ENCODE measurements at regions of chr10 and their contacts with region 1.

Region 1: GRCh38 chr10:95246579-95247051 is 44.2 kb downstream of the PDLIM1 start:
- DNase-seq: peak; percentile 13 to 77 (median 61)
- ATAC-seq: peak; percentile 40
- H3K4me3 ChIP-seq: no peak overlapping the region
- H3K4me3 Mint-ChIP-seq: no peak overlapping the region
- H3K27ac ChIP-seq: no peak overlapping the region
- H3K27ac Mint-ChIP-seq: no peak overlapping the region
- H3K4me1 ChIP-seq: no peaks in the 10 kb centered on the region
- H3K4me1 Mint-ChIP-seq: no peaks in the 10 kb centered on the region
- H3K27me3 ChIP-seq: no peaks in the 10 kb centered on the region
- H3K27me3 Mint-ChIP-seq: peaks cover 15% of the 10 kb centered on the region
- CTCF ChIP-seq: peak; percentile 62

Region 2: GRCh38 chr10:94630017-94630688 is 616.5 kb before region 1 on chr10:
- CTCF ChIA-PET with region 1: no interaction called
- POLR2A ChIA-PET with region 1: no interaction called
- intact Hi-C with region 1: loop called (anchors 5 to 10 kb)
- DNase-seq: peak in 2 of 9 experiments; percentile 3 to 13
- ATAC-seq: no peak
- H3K4me3 ChIP-seq: no peak overlapping the region
- H3K4me3 Mint-ChIP-seq: no peak overlapping the region
- H3K27ac ChIP-seq: no peak overlapping the region
- H3K27ac Mint-ChIP-seq: no peak overlapping the region
- H3K4me1 ChIP-seq: no peaks in the 10 kb centered on the region
- H3K4me1 Mint-ChIP-seq: no peaks in the 10 kb centered on the region
- H3K27me3 ChIP-seq: no peaks in the 10 kb centered on the region
- H3K27me3 Mint-ChIP-seq: no peaks in the 10 kb centered on the region
- CTCF ChIP-seq: peak; percentile 60

Region 3: GRCh38 chr10:95097805-95098204 is 148.8 kb before region 1 on chr10:
- CTCF ChIA-PET with region 1: no interaction called
- POLR2A ChIA-PET with region 1: no interaction called
- intact Hi-C with region 1: no loop called
- DNase-seq: no peak
- ATAC-seq: no peak
- H3K4me3 ChIP-seq: no peak overlapping the region
- H3K4me3 Mint-ChIP-seq: no peak overlapping the region
- H3K27ac ChIP-seq: no peak overlapping the region
- H3K27ac Mint-ChIP-seq: no peak overlapping the region
- H3K4me1 ChIP-seq: no peaks in the 10 kb centered on the region
- H3K4me1 Mint-ChIP-seq: no peaks in the 10 kb centered on the region
- H3K27me3 ChIP-seq: no peaks in the 10 kb centered on the region
- H3K27me3 Mint-ChIP-seq: no peaks in the 10 kb centered on the region
- CTCF ChIP-seq: no peak

Region 4: DNA sequence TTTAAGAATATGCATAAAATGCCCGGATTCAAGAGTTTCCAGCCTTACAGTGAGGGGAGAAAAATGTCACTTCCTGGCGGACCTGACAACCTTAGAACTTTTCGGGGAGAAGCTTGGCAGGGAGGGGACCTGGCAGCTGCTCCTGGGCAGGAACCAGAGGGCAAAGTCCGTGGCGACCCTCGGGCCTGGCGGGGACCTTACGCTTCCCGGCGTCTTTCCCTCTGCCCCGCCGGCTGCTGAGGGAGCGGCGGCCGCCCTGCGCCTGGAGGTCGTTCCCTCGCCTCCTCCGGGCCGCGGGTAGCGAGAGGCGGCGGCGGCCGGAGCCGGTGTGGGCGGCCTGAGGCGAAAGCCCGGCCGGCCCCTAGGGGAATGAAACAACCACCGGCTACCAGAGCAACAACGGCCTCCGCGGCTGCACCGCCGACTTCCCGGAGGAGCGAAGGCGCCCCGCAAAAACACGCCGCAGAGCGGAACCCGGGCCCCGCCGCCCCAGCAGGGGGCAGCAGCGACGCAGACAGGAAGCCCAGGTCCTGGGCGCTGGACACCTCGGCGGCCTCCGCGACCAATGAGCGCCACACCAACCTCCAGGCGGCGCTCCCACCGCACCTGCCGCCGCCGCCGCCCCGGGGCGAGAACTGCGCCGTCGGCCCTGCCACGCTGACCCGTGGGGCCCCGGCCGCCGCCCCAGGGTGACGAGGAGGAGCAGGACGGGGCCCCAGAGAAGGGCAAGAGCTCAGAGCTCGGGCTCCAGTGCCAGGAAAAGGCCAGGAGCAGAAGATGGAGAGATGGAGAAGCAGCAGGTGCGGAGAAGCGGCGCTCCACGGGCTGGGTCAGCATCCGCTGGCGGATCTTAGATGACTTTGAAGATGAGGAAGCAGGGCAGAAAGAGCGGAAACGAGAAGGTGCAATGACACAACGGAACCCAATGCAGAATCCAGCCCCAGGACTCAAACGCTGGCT is 63.1 kb before region 1 on chr10:
- CTCF ChIA-PET with region 1: interaction called, 3 read pairs
- POLR2A ChIA-PET with region 1: no interaction called
- intact Hi-C with region 1: loop called (anchors 2 kb)
- DNase-seq: peak; percentile 22 to 84 (median 63)
- ATAC-seq: peak; percentile 82
- H3K4me3 ChIP-seq: peak overlapping the region; percentile 56 to 63
- H3K4me3 Mint-ChIP-seq: peak overlapping the region; percentile 78
- H3K27ac ChIP-seq: no peak overlapping the region
- H3K27ac Mint-ChIP-seq: no peak overlapping the region
- H3K4me1 ChIP-seq: no peaks in the 10 kb centered on the region
- H3K4me1 Mint-ChIP-seq: peaks cover 7% of the 10 kb centered on the region
- H3K27me3 ChIP-seq: peaks cover 0 to 3% of the 10 kb centered on the region in 2 experiments
- H3K27me3 Mint-ChIP-seq: peaks cover 22% of the 10 kb centered on the region
- CTCF ChIP-seq: peak; percentile 56

Region 5: DNA sequence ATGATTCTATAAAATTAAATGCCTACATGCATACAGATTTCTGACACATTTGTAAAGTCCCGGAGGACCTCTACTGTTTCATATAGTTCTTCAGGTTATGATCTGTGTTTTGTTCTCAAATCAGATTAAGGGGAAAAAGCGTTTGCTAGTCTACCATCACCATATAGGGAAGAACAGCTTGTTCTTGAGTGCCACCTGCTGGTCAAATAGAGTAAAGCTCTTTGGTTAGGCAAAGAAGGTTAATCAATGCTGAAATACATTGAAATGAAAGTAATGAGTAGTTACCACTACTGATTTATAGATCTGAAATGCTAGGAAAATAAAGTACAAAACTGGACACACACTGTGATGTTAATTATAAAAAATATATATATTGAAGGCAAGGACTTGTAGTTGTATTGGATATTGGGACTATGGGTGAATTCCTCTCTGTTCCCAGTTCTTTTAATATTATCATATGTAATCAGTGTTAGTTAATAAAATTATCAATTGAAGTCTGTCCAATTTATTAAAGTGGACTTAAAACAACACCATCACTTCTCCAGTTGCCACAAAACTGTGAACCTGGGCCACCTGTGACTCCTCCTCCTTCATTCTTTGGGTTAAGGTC is 116.8 kb after region 1 on chr10:
- CTCF ChIA-PET with region 1: interaction called, 49 read pairs
- POLR2A ChIA-PET with region 1: no interaction called
- intact Hi-C with region 1: loop called (anchors 1 kb)
- DNase-seq: peak in 7 of 9 experiments; percentile 6 to 75 (median 35)
- ATAC-seq: peak; percentile 46
- H3K4me3 ChIP-seq: no peak overlapping the region
- H3K4me3 Mint-ChIP-seq: no peak overlapping the region
- H3K27ac ChIP-seq: no peak overlapping the region
- H3K27ac Mint-ChIP-seq: no peak overlapping the region
- H3K4me1 ChIP-seq: no peaks in the 10 kb centered on the region
- H3K4me1 Mint-ChIP-seq: no peaks in the 10 kb centered on the region
- H3K27me3 ChIP-seq: no peaks in the 10 kb centered on the region
- H3K27me3 Mint-ChIP-seq: peaks cover 11% of the 10 kb centered on the region
- CTCF ChIP-seq: peak; percentile 99

Measured in CD8-positive, alpha-beta T cell (primary cell).